Activated CD8-positive, alpha-beta T cell treated with anti-CD3 and anti-CD28 coated beads, Interleukin-2, amount 10 ng/mL, durations not matched to agents 7 days and 5 days (primary cell): ENCODE measurements at regions of chr20 and their contacts with region 1.

Region 1: GRCh38 chr20:33674295-33675135 is at the start of gene NECAB3:
- DNase-seq: peak; percentile 73
- ATAC-seq: peak; percentile 85
- H3K4me3 Mint-ChIP-seq: peak within 1 kb of the TSS; percentile 77
- H3K27ac Mint-ChIP-seq: peak within 1 kb of the TSS; percentile 78
- H3K4me1 Mint-ChIP-seq: peaks cover 60% of the 10 kb centered on the region
- H3K27me3 Mint-ChIP-seq: no peaks in the 10 kb centered on the region
- total RNA-seq, gene NECAB3: 28.4 to 38.2 TPM

Region 2: GRCh38 chr20:33262658-33263065 is 411.9 kb before region 1 on chr20:
- CTCF ChIA-PET with region 1: no interaction called
- POLR2A ChIA-PET with region 1: no interaction called
- DNase-seq: no peak
- ATAC-seq: peak; percentile 53
- H3K4me3 Mint-ChIP-seq: no peak overlapping the region
- H3K27ac Mint-ChIP-seq: no peak overlapping the region
- H3K4me1 Mint-ChIP-seq: peaks cover 3% of the 10 kb centered on the region
- H3K27me3 Mint-ChIP-seq: peaks cover 30% of the 10 kb centered on the region

Region 3: GRCh38 chr20:33646191-33646590 is 28.3 kb before region 1 on chr20:
- CTCF ChIA-PET with region 1: no interaction called
- POLR2A ChIA-PET with region 1: no interaction called
- DNase-seq: no peak
- ATAC-seq: no peak
- H3K4me3 Mint-ChIP-seq: no peak overlapping the region
- H3K27ac Mint-ChIP-seq: no peak overlapping the region
- H3K4me1 Mint-ChIP-seq: peaks cover 15% of the 10 kb centered on the region
- H3K27me3 Mint-ChIP-seq: no peaks in the 10 kb centered on the region

Region 4: GRCh38 chr20:33686100-33686983 is 11.8 kb after region 1 on chr20 and contains the start of gene E2F1:
- CTCF ChIA-PET with region 1: interaction called, 126 read pairs
- POLR2A ChIA-PET with region 1: interaction called, 148 read pairs
- DNase-seq: peak; percentile 97
- ATAC-seq: peak; percentile 91
- H3K4me3 Mint-ChIP-seq: peak within 1 kb of the TSS; percentile 94
- H3K27ac Mint-ChIP-seq: peak within 1 kb of the TSS; percentile 93
- H3K4me1 Mint-ChIP-seq: peaks cover 89% of the 10 kb centered on the region
- H3K27me3 Mint-ChIP-seq: no peaks in the 10 kb centered on the region
- total RNA-seq, gene E2F1: 74.5 to 80.8 TPM

Region 5: GRCh38 chr20:33709398-33709797 is 34.9 kb after region 1 on chr20:
- CTCF ChIA-PET with region 1: no interaction called
- POLR2A ChIA-PET with region 1: no interaction called
- DNase-seq: no peak
- ATAC-seq: no peak
- H3K4me3 Mint-ChIP-seq: no peak overlapping the region
- H3K27ac Mint-ChIP-seq: peak overlapping the region; percentile 57
- H3K4me1 Mint-ChIP-seq: peaks cover 17% of the 10 kb centered on the region
- H3K27me3 Mint-ChIP-seq: no peaks in the 10 kb centered on the region

Region 6: GRCh38 chr20:33781133-33781532 is 106.6 kb after region 1 on chr20:
- CTCF ChIA-PET with region 1: no interaction called
- POLR2A ChIA-PET with region 1: no interaction called
- DNase-seq: no peak
- ATAC-seq: no peak
- H3K4me3 Mint-ChIP-seq: no peak overlapping the region
- H3K27ac Mint-ChIP-seq: peak overlapping the region; percentile 46
- H3K4me1 Mint-ChIP-seq: peaks cover 20% of the 10 kb centered on the region
- H3K27me3 Mint-ChIP-seq: no peaks in the 10 kb centered on the region